ENCODE measurements at regions of chr9 and their contacts with region 1.

Region 1: DNA sequence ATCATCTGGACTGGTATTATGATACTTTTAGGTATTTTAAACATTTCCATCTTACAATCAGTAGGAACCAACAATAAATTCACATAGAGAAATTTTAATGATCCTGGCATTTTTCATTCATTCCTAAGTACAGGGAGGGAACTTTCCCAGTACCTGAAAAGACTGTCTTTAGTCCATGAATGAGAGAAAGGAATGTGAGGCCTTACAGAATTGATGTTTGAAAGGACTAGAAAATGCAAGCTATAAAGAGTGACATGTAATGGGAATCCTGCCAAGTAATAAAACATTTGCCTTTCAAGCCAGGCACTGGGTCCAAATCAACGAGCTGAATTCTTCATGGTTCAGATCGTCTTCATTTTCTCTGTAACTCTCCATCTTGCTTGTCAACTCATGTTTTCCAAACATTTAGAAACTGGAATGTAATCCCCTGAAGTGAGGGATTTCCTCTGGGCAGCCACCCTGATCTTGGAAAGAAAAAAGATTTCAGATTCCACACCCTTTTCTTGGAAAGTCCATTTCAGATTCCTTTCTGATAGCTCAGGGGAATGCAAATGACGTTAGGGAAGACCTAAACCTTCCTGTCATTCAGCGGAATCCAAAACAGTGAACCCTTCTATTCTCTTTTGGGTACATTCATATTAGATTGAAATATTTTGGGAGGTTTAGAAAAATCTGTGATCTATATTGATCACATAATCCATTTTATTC is 315.8 kb downstream of the SH3GL2 start:
- DNase-seq: no peak
- ATAC-seq: no peak
- H3K4me3 ChIP-seq: no peak overlapping the region
- H3K27ac ChIP-seq: no peak overlapping the region
- H3K4me1 ChIP-seq: no peaks in the 10 kb centered on the region
- H3K27me3 ChIP-seq: peaks cover 62% of the 10 kb centered on the region
- CTCF ChIP-seq: no peak

Region 2: GRCh38 chr9:17824191-17824590 is 70.4 kb before region 1 on chr9:
- CTCF ChIA-PET with region 1: no interaction called
- POLR2A ChIA-PET with region 1: interaction called, 19 read pairs
- intact Hi-C with region 1: no loop called
- DNase-seq: no peak
- ATAC-seq: no peak
- H3K4me3 ChIP-seq: no peak overlapping the region
- H3K27ac ChIP-seq: no peak overlapping the region
- H3K4me1 ChIP-seq: no peaks in the 10 kb centered on the region
- H3K27me3 ChIP-seq: no peaks in the 10 kb centered on the region
- CTCF ChIP-seq: no peak

Measured in PC-3 (cell line).